PC-9 (cell line): ENCODE measurements at regions of chr9 and their contacts with region 1.

Region 1: GRCh38 chr9:73176450-73176875 is 24.8 kb downstream of the ANXA1 start:
- DNase-seq: peak; percentile 82 to 88
- H3K4me3 ChIP-seq: no peak overlapping the region
- H3K27ac ChIP-seq: peak overlapping the region; percentile 69
- H3K4me1 ChIP-seq: peaks cover 39% of the 10 kb centered on the region
- H3K27me3 ChIP-seq: no peaks in the 10 kb centered on the region
- CTCF ChIP-seq: no peak

Region 2: GRCh38 chr9:72871685-72872084 is 304.8 kb before region 1 on chr9:
- CTCF ChIA-PET with region 1: no interaction called
- POLR2A ChIA-PET with region 1: interaction called, 12 read pairs
- intact Hi-C with region 1: no loop called
- DNase-seq: no peak
- H3K4me3 ChIP-seq: no peak overlapping the region
- H3K27ac ChIP-seq: no peak overlapping the region
- H3K4me1 ChIP-seq: no peaks in the 10 kb centered on the region
- H3K27me3 ChIP-seq: no peaks in the 10 kb centered on the region
- CTCF ChIP-seq: peak; percentile 73

Region 3: GRCh38 chr9:73104342-73104741 is 72.1 kb before region 1 on chr9:
- CTCF ChIA-PET with region 1: interaction called, 12 read pairs
- POLR2A ChIA-PET with region 1: interaction called, 3 read pairs
- intact Hi-C with region 1: no loop called
- DNase-seq: no peak
- H3K4me3 ChIP-seq: no peak overlapping the region
- H3K27ac ChIP-seq: no peak overlapping the region
- H3K4me1 ChIP-seq: no peaks in the 10 kb centered on the region
- H3K27me3 ChIP-seq: no peaks in the 10 kb centered on the region
- CTCF ChIP-seq: no peak

Region 4: GRCh38 chr9:73149371-73150067 is 26.9 kb before region 1 on chr9:
- CTCF ChIA-PET with region 1: no interaction called
- POLR2A ChIA-PET with region 1: interaction called, 13 read pairs
- intact Hi-C with region 1: loop called (anchors 1 kb)
- DNase-seq: peak in 1 of 2 experiments; percentile 81
- H3K4me3 ChIP-seq: no peak overlapping the region; the same call in 1 of the 2 replicates
- H3K27ac ChIP-seq: peak overlapping the region; percentile 86
- H3K4me1 ChIP-seq: peaks cover 67% of the 10 kb centered on the region
- H3K27me3 ChIP-seq: no peaks in the 10 kb centered on the region
- CTCF ChIP-seq: no peak

Region 5: GRCh38 chr9:73157811-73158210 is 18.7 kb before region 1 on chr9:
- CTCF ChIA-PET with region 1: no interaction called
- POLR2A ChIA-PET with region 1: interaction called, 12 read pairs
- intact Hi-C with region 1: loop called (anchors 1 kb)
- DNase-seq: no peak
- H3K4me3 ChIP-seq: no peak overlapping the region
- H3K27ac ChIP-seq: no peak overlapping the region
- H3K4me1 ChIP-seq: peaks cover 4% of the 10 kb centered on the region; the same call in 1 of the 2 replicates
- H3K27me3 ChIP-seq: no peaks in the 10 kb centered on the region
- CTCF ChIP-seq: no peak